IMR-90 (cell line): ENCODE measurements at regions of chrX and their contacts with region 1.

Region 1: GRCh38 chrX:18390941-18391538 is 34.4 kb upstream of the CDKL5 start:
- DNase-seq: peak; percentile 63
- ATAC-seq: peak; percentile 71
- H3K4me3 ChIP-seq: no peak overlapping the region
- H3K27ac ChIP-seq: no peak overlapping the region
- H3K4me1 ChIP-seq: no peaks in the 10 kb centered on the region
- H3K27me3 ChIP-seq: no peaks in the 10 kb centered on the region
- CTCF ChIP-seq: peak; percentile 73
- POLR2A ChIP-seq: no peak
- RAD21 ChIP-seq: peak; percentile 72

Region 2: DNA sequence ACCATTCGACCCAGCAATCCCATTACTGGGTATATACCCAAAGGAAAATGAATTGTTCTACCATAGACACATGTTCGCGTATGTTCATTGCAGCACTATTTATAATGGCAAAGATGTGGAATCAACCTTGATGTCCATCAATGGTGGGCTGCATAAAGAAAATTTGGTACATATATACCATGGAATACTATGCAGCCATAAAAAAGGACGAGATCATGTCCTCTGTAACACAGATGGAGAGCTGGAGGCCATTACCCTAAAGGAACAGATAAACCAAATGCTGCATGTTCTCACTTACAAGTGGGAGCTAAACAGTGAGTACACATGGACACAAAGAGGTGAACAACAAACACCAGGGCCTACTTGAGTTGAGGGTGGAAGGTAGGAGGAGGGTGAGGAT is 81.6 kb before region 1 on chrX:
- CTCF ChIA-PET with region 1: no interaction called
- POLR2A ChIA-PET with region 1: no interaction called
- dilution Hi-C with region 1: no loop called
- in situ Hi-C with region 1: no loop called
- intact Hi-C with region 1: no loop called
- DNase-seq: no peak
- ATAC-seq: no peak
- H3K4me3 ChIP-seq: no peak overlapping the region
- H3K27ac ChIP-seq: no peak overlapping the region
- H3K4me1 ChIP-seq: no peaks in the 10 kb centered on the region
- H3K27me3 ChIP-seq: no peaks in the 10 kb centered on the region
- CTCF ChIP-seq: no peak
- POLR2A ChIP-seq: no peak
- RAD21 ChIP-seq: no peak

Region 3: DNA sequence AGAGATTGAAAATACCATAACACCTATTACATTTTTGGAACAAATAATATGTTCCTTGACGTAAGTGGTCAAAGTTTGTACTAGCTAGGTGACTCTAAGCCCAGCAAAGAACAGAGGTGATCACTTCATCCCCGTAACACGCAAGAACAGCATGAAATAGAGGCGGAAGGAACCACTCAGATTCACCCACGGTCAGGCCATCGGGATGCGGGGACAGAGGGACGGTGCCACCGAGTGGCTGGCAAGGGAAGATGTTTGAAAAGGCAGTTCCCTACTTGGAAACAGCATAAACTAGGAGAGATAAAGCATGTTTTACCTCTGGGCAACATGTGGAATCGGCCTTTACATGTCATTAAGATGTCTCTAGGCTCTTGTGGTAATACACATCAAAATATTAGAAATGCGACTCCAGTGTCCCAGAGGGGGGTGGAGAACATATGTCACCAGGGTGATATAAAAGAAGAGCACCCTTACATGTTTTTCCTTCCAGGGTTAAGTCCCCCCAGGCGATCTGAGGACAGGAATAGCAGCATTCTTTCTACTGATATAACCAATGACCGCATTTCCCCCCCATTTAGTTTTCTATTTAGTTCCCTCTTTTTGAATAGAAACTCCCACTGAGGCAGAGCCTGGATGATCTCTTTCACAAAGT is 508.9 kb after region 1 on chrX:
- CTCF ChIA-PET with region 1: no interaction called
- POLR2A ChIA-PET with region 1: no interaction called
- dilution Hi-C with region 1: no loop called
- in situ Hi-C with region 1: loop called (anchors 10 kb)
- intact Hi-C with region 1: no loop called
- DNase-seq: no peak
- ATAC-seq: no peak
- H3K4me3 ChIP-seq: no peak overlapping the region
- H3K27ac ChIP-seq: no peak overlapping the region
- H3K4me1 ChIP-seq: no peaks in the 10 kb centered on the region
- H3K27me3 ChIP-seq: no peaks in the 10 kb centered on the region
- CTCF ChIP-seq: peak; percentile 29
- POLR2A ChIP-seq: no peak
- RAD21 ChIP-seq: peak; percentile 44

Region 4: DNA sequence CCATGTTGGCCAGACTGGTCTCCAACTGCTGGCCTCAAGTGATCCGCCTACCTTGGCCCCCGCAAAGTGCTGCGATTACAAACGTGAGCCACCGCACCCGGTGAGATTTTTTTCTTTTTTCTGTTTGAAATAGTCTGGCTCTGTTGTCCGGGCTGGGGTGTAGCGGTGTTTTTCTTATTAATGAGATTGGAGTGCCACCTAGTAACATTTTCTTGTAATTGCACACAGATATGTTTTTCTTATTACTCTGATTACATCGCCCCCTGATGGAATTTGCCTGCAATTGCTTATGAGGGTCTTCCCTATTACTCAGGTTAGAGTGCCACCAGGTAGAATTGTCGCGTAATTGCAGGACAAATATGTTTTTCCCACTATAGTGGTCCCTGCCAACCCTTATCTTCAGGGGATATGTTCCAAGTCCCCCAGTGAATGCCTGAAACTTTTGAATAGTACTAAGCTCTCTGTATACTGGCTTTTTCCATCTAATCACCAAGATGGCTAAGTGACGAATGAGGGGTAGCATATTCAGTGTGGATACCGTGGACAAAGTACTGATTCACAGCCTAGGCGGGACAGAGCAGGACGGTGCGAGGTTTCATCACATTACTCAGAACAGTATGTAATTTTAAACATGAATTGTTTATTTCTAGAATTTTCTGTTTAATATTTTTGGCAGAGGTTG is 944.0 kb after region 1 on chrX:
- CTCF ChIA-PET with region 1: interaction called, 7 read pairs
- POLR2A ChIA-PET with region 1: no interaction called
- dilution Hi-C with region 1: no loop called
- in situ Hi-C with region 1: loop called (anchors 5 kb)
- intact Hi-C with region 1: loop called (anchors 1 kb)
- DNase-seq: peak; percentile 19
- ATAC-seq: no peak
- H3K4me3 ChIP-seq: no peak overlapping the region
- H3K27ac ChIP-seq: no peak overlapping the region
- H3K4me1 ChIP-seq: no peaks in the 10 kb centered on the region
- H3K27me3 ChIP-seq: peaks cover 5% of the 10 kb centered on the region
- CTCF ChIP-seq: peak; percentile 58
- POLR2A ChIP-seq: no peak
- RAD21 ChIP-seq: peak; percentile 28

Region 5: GRCh38 chrX:19544693-19545305 is 1153.8 kb after region 1 on chrX:
- CTCF ChIA-PET with region 1: no interaction called
- POLR2A ChIA-PET with region 1: no interaction called
- dilution Hi-C with region 1: no loop called
- in situ Hi-C with region 1: loop called (anchors 25 kb)
- intact Hi-C with region 1: loop called (anchors 5 kb)
- DNase-seq: peak; percentile 70
- ATAC-seq: peak; percentile 90
- H3K4me3 ChIP-seq: no peak overlapping the region
- H3K27ac ChIP-seq: no peak overlapping the region
- H3K4me1 ChIP-seq: no peaks in the 10 kb centered on the region
- H3K27me3 ChIP-seq: no peaks in the 10 kb centered on the region; the same call in 1 of the 2 replicates
- CTCF ChIP-seq: peak; percentile 81
- POLR2A ChIP-seq: no peak
- RAD21 ChIP-seq: peak; percentile 78